Transverse colon (tissue), 4 donors: ENCODE measurements at regions of chr10 and their contacts with region 1.

Region 1: DNA sequence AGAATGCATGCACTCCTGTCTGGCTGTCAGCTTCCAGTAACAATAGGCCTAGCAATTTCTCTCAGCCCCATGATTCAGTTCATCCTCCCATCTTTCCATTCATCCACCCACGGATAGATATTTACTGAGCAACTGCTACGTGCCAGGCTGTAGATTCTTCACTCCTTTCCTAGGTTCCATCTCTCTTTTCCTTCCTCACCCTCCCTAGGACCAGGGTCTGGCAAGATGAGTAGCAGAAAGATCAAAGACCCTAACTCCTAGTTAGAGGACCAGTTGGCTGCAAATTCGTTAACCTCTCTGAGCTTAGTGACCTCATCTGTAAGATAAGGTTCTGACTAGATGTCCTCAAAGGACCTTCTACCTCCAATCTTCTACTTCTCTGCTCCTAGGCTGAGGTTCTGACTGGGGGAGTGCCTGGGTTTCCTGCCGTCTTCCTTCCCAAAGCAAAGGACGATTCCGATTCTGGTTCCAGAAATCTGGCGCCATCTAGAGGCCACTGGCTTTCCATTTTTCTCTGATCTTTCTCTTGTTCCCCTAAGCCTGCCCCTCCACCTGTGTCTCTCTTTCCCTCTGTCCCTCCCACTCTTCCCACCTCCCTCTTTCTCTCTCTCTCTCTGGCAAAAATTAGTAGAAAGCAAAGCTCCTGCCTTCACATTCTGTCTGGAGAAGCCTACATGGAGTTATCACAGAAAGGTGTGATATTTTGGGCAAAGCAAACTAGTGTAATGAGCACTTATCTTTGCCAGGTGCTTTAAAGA is 26.2 kb downstream of the TBATA start:
- DNase-seq: peak; percentile 77
- H3K4me3 ChIP-seq: no peak overlapping the region
- H3K27ac ChIP-seq: no peak overlapping the region
- H3K4me1 ChIP-seq: no peaks in the 10 kb centered on the region
- H3K27me3 ChIP-seq: no peaks in the 10 kb centered on the region
- CTCF ChIP-seq: peak; percentile 66 to 79 (median 76)
- EP300 ChIP-seq: no peak
- POLR2A ChIP-seq: no peak

Region 2: GRCh38 chr10:70267161-70267933 is 491.6 kb before region 1 on chr10:
- in situ Hi-C with region 1: no loop called
- intact Hi-C with region 1: no loop called
- DNase-seq: peak; percentile 30
- H3K4me3 ChIP-seq: no peak overlapping the region
- H3K27ac ChIP-seq: peak overlapping the region in 1 of 4 donors; percentile 14
- H3K4me1 ChIP-seq: no peaks in the 10 kb centered on the region
- H3K27me3 ChIP-seq: peaks cover 6% of the 10 kb centered on the region
- CTCF ChIP-seq: no peak
- EP300 ChIP-seq: no peak
- POLR2A ChIP-seq: no peak

Region 3: GRCh38 chr10:70461215-70461986 is 297.5 kb before region 1 on chr10:
- in situ Hi-C with region 1: loop called in 2 of 4 experiments (anchors 25 kb)
- intact Hi-C with region 1: no loop called
- DNase-seq: peak; percentile 62
- H3K4me3 ChIP-seq: no peak overlapping the region
- H3K27ac ChIP-seq: peak overlapping the region in 2 of 4 donors; percentile 16 to 44
- H3K4me1 ChIP-seq: peaks cover 8 to 28% (median 19%) of the 10 kb centered on the region in 4 donors
- H3K27me3 ChIP-seq: peaks cover 31% of the 10 kb centered on the region
- CTCF ChIP-seq: peak; percentile 73 to 82 (median 80)
- EP300 ChIP-seq: no peak
- POLR2A ChIP-seq: no peak

Region 4: GRCh38 chr10:70561070-70561469 is 197.9 kb before region 1 on chr10:
- in situ Hi-C with region 1: loop called in 1 of 4 experiments (anchors 10 kb)
- intact Hi-C with region 1: loop called (anchors 5 kb)
- DNase-seq: no peak
- H3K4me3 ChIP-seq: no peak overlapping the region
- H3K27ac ChIP-seq: peak overlapping the region in 1 of 4 donors; percentile 14
- H3K4me1 ChIP-seq: peaks cover 0 to 15% (median 5%) of the 10 kb centered on the region in 4 donors
- H3K27me3 ChIP-seq: no peaks in the 10 kb centered on the region
- CTCF ChIP-seq: no peak
- EP300 ChIP-seq: no peak
- POLR2A ChIP-seq: no peak

Region 5: GRCh38 chr10:70715853-70716795 is 42.8 kb before region 1 on chr10:
- in situ Hi-C with region 1: no loop called
- intact Hi-C with region 1: no loop called
- DNase-seq: no peak
- H3K4me3 ChIP-seq: no peak overlapping the region
- H3K27ac ChIP-seq: no peak overlapping the region
- H3K4me1 ChIP-seq: peaks cover 0 to 9% (median 0%) of the 10 kb centered on the region in 4 donors
- H3K27me3 ChIP-seq: no peaks in the 10 kb centered on the region
- CTCF ChIP-seq: no peak
- EP300 ChIP-seq: no peak
- POLR2A ChIP-seq: no peak